Ovary (tissue), 10 donors: ENCODE measurements at regions of chr20 and their contacts with region 1.

Region 1: GRCh38 chr20:54173653-54174456 is at the start of gene CYP24A1:
- DNase-seq: no peak
- H3K4me3 ChIP-seq: no peak within 1 kb of the TSS
- H3K27ac ChIP-seq: no peak within 1 kb of the TSS
- H3K4me1 ChIP-seq: peaks cover 7% of the 10 kb centered on the region
- H3K27me3 ChIP-seq: no peaks in the 10 kb centered on the region
- CTCF ChIP-seq: no peak
- EP300 ChIP-seq: no peak
- POLR2A ChIP-seq: no peak
- total RNA-seq, gene CYP24A1: 0.15 to 3.7 TPM in 2 of 7 donors, not detected in the others

Region 2: DNA sequence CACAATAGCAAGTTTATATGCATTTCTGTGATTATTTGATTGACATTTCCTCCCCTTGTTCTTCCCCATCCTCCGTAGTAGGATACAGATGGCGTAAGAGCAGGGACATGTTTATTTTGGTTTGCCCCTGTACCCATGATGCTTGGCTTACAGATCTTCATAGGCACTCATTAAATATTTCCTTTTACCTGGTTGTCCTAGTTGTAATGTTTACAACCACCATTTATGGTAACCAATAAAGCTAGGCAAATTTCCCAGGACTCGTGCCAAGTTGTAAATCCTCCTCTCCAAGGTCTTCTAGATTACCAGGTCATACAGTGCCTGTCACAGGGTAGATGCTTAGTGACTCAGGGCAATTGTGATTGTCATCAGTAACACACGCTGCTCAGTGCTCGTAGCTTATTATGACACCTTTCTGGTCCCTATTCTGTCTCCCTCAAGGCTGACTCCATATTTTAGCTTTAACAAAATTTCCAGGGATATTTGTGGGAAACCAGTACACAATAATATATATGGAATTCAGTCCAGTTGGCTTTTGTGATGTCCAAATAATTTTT is 24.8 kb before region 1 on chr20:
- intact Hi-C with region 1: loop called in 1 of 4 experiments (anchors 2 kb)
- DNase-seq: no peak
- H3K4me3 ChIP-seq: no peak overlapping the region
- H3K27ac ChIP-seq: no peak overlapping the region
- H3K4me1 ChIP-seq: no peaks in the 10 kb centered on the region
- H3K27me3 ChIP-seq: no peaks in the 10 kb centered on the region
- CTCF ChIP-seq: no peak
- EP300 ChIP-seq: no peak
- POLR2A ChIP-seq: no peak